ENCODE measurements at regions of chr19 and their contacts with region 1.

Region 1: GRCh38 chr19:22807061-22807835 is 23.3 kb upstream of the ZNF99 start:
- DNase-seq: no peak
- ATAC-seq: no peak
- H3K4me3 ChIP-seq: no peak overlapping the region
- H3K4me3 Mint-ChIP-seq: no peak overlapping the region
- H3K27ac ChIP-seq: no peak overlapping the region
- H3K27ac Mint-ChIP-seq: no peak overlapping the region
- H3K4me1 ChIP-seq: no peaks in the 10 kb centered on the region
- H3K4me1 Mint-ChIP-seq: no peaks in the 10 kb centered on the region
- H3K27me3 ChIP-seq: no peaks in the 10 kb centered on the region
- H3K27me3 Mint-ChIP-seq: peaks cover 0 to 15% (median 0%) of the 10 kb centered on the region in 5 donors

Region 2: DNA sequence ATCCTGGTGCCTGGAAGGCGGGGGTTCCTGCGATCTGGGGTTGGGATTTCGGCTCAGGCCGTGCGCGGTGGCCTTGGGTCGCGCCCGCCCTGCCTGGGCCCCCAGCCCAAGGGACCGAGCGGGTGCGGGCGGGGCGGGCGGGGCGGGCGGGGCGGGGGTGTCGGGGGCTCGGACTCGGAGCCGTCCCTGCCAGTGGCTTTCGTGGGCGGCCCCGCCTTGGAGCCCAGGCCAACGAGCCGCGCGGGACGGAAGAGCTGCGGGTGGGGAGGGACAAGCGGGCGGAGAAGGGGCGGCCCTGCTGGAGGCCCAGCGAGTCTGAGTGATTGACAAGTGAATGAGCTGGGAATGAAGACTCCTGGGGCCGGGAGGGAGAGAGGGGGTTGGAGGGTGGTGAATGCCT is 545.6 kb before region 1 on chr19:
- CTCF ChIA-PET with region 1: no interaction called
- POLR2A ChIA-PET with region 1: no interaction called
- intact Hi-C with region 1: loop called in 1 of 2 experiments (anchors 5 kb)
- DNase-seq: no peak
- ATAC-seq: no peak
- H3K4me3 ChIP-seq: no peak overlapping the region
- H3K4me3 Mint-ChIP-seq: no peak overlapping the region
- H3K27ac ChIP-seq: no peak overlapping the region
- H3K27ac Mint-ChIP-seq: no peak overlapping the region
- H3K4me1 ChIP-seq: no peaks in the 10 kb centered on the region
- H3K4me1 Mint-ChIP-seq: no peaks in the 10 kb centered on the region
- H3K27me3 ChIP-seq: no peaks in the 10 kb centered on the region
- H3K27me3 Mint-ChIP-seq: no peaks in the 10 kb centered on the region

Region 3: DNA sequence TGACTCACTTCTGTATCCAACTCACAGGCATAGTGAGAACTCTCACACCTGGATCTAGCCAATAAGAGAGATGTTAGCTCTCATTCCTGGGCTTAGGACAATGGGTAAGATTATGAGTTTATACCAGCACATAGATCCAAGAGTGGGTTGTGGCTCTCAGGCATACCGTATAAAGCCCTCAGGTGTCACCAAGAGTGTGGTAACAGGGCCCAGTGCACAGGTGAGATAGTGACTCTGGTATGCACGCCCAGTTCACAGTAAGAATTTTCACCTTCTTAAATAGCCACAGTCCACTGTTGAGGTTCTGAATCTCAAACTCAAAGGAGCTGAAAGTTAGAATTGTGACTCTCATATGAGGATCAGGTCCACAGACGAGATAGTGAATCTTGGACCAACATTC is 15.8 kb after region 1 on chr19:
- CTCF ChIA-PET with region 1: no interaction called
- POLR2A ChIA-PET with region 1: no interaction called
- intact Hi-C with region 1: no loop called
- DNase-seq: no peak
- ATAC-seq: no peak
- H3K4me3 ChIP-seq: no peak overlapping the region
- H3K4me3 Mint-ChIP-seq: no peak overlapping the region
- H3K27ac ChIP-seq: no peak overlapping the region
- H3K27ac Mint-ChIP-seq: no peak overlapping the region
- H3K4me1 ChIP-seq: no peaks in the 10 kb centered on the region
- H3K4me1 Mint-ChIP-seq: no peaks in the 10 kb centered on the region
- H3K27me3 ChIP-seq: no peaks in the 10 kb centered on the region
- H3K27me3 Mint-ChIP-seq: no peaks in the 10 kb centered on the region

Region 4: DNA sequence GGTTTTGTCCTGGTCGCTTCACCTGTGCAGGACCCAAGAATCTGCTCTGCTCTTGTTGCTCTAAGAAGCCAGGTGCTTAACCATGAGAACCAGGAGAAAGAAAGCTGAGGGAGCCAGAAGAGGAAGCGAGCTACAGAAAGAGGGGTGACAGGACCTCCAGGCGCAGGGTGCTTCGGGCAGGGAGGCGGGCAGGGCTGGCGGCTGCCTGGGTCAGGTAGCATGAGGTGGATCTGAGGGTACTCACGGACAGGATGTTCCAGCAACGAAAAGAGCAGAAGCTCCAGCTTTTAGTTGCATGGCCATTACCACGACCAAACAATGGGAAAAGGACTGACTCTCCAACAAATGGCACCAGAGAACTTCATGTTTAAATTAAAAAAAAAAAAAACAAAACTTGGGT is 383.1 kb after region 1 on chr19:
- CTCF ChIA-PET with region 1: no interaction called
- POLR2A ChIA-PET with region 1: no interaction called
- intact Hi-C with region 1: no loop called
- DNase-seq: no peak
- ATAC-seq: no peak
- H3K4me3 ChIP-seq: no peak overlapping the region
- H3K4me3 Mint-ChIP-seq: no peak overlapping the region
- H3K27ac ChIP-seq: no peak overlapping the region
- H3K27ac Mint-ChIP-seq: no peak overlapping the region
- H3K4me1 ChIP-seq: no peaks in the 10 kb centered on the region
- H3K4me1 Mint-ChIP-seq: no peaks in the 10 kb centered on the region
- H3K27me3 ChIP-seq: no peaks in the 10 kb centered on the region
- H3K27me3 Mint-ChIP-seq: no peaks in the 10 kb centered on the region

Region 5: DNA sequence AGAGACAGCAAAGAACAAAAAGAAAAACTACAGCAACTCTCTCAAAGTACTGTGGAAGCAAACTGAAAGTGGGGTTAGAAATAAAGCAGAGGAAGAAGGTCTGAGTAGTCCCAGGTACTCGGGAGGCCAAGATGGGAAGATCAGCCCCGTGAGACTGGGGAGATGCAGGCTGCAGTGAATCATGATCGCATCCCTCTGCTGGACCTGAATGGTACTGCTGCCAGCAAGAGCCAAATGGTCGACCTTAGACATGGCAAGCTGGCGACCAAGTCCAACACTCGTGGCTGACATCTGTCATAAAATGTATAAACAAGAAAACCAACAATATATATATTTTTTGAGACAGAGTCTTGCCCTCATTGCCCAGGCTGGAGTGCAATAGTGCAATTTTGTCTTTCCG is 476.7 kb after region 1 on chr19:
- CTCF ChIA-PET with region 1: no interaction called
- POLR2A ChIA-PET with region 1: no interaction called
- intact Hi-C with region 1: no loop called
- DNase-seq: peak; percentile 26 to 60 (median 42)
- ATAC-seq: peak; percentile 91
- H3K4me3 ChIP-seq: no peak overlapping the region
- H3K4me3 Mint-ChIP-seq: peak overlapping the region in 6 of 10 donors; percentile 2 to 61 (median 30)
- H3K27ac ChIP-seq: no peak overlapping the region
- H3K27ac Mint-ChIP-seq: peak overlapping the region in 2 of 9 donors; percentile 38 to 60
- H3K4me1 ChIP-seq: no peaks in the 10 kb centered on the region
- H3K4me1 Mint-ChIP-seq: peaks cover 3 to 35% (median 25%) of the 10 kb centered on the region in 7 donors
- H3K27me3 ChIP-seq: no peaks in the 10 kb centered on the region
- H3K27me3 Mint-ChIP-seq: peaks cover 0 to 4% (median 0%) of the 10 kb centered on the region in 5 donors